ENCODE measurements at regions of chr9 and their contacts with region 1.

Region 1: GRCh38 chr9:25537808-25538207 is 140.4 kb downstream of the TUSC1 start:
- DNase-seq: no peak
- H3K4me3 ChIP-seq: no peak overlapping the region
- H3K27ac ChIP-seq: no peak overlapping the region
- H3K4me1 ChIP-seq: no peaks in the 10 kb centered on the region
- H3K27me3 ChIP-seq: no peaks in the 10 kb centered on the region
- CTCF ChIP-seq: no peak

Region 2: DNA sequence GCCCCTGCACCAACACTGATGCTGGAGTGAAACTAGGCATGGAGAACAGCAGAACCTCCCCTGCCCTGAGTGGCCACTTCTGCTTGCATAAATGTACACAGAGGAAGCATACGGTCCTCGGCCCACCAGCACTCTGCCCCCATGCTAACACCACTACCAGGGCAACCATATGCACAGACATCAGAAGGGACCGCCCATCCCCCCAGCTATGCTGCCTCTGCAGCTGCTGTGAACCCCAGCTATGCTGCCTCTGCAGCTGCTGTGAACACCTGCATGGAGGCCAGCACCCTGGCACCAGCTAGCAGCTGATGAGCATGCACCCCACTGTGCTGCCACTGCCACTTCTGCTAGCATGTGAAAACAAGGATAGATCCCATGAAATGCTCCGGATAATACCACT is 109.9 kb before region 1 on chr9:
- CTCF ChIA-PET with region 1: no interaction called
- dilution Hi-C with region 1: no loop called
- in situ Hi-C with region 1: loop called in 1 of 2 experiments (anchors 25 kb)
- intact Hi-C with region 1: no loop called
- DNase-seq: no peak
- H3K4me3 ChIP-seq: no peak overlapping the region
- H3K27ac ChIP-seq: no peak overlapping the region
- H3K4me1 ChIP-seq: no peaks in the 10 kb centered on the region
- H3K27me3 ChIP-seq: no peaks in the 10 kb centered on the region
- CTCF ChIP-seq: no peak

Measured in mammary epithelial cell (primary cell).